ENCODE measurements at regions of chr4 and their contacts with region 1.

Region 1: DNA sequence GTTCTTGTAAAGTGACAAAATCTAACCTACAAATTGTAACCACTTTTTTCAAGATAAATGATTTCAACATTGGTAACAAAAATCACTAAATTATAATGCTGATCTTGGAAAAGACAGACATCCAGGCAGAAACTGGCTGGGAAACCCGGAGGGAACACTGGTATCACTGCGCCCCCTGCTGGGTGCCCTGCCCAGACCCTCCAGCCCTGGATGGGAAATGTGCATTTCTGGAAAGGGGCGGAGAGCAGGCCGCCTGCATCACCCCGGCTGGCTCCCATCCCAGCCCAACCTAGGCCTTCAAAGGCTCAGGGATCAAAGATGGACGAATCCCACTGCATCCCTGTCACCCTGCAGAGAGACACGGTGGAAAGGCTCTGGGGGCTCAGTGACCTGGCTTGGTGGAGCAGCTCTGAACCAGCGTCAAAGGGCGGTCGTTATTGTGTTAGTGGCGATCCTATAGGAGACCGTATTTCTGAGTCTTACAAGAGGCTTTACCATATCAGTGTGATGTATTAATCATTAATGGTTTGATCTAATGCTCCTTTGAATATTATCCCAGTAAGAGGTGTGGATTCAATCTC is 37.3 kb downstream of the ACOX3 start:
- DNase-seq: no peak
- H3K4me3 ChIP-seq: no peak overlapping the region
- H3K27ac ChIP-seq: no peak overlapping the region
- H3K4me1 ChIP-seq: no peaks in the 10 kb centered on the region
- H3K27me3 ChIP-seq: no peaks in the 10 kb centered on the region
- CTCF ChIP-seq: peak in 2 of 3 experiments; percentile 86 to 88

Region 2: DNA sequence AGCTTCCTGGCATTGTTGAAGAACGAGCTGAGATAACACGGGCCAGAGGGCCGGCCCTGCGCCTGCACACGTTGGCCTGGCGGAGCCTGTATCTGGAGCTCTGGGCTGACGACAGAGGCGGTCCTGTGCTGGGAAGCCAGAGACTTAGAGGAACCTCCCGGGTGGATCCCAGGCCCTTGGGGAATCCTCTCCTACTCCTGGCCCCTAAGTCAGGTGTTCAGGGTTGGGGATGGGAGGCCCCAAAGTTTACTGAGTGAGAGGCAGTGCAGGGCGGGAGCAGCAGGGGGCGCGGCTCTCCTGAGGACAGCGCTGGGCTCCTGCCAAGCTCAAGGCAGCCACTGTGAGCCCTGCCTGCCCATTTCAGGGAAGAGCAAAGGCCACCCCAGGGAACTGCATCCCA is 136.2 kb before region 1 on chr4:
- dilution Hi-C with region 1: loop called (anchors 25 kb)
- DNase-seq: no peak
- H3K4me3 ChIP-seq: no peak overlapping the region
- H3K27ac ChIP-seq: no peak overlapping the region
- H3K4me1 ChIP-seq: no peaks in the 10 kb centered on the region
- H3K27me3 ChIP-seq: peaks cover 37% of the 10 kb centered on the region
- CTCF ChIP-seq: peak in 2 of 3 experiments; percentile 79 to 97

Measured in keratinocyte (primary cell).